H1 (cell line): ENCODE measurements at regions of chr2 and their contacts with region 1.

Region 1: GRCh38 chr2:231713730-231714430 is 5.6 kb downstream of the PTMA start:
- DNase-seq: peak; percentile 76 to 97
- H3K4me3 ChIP-seq: no peak overlapping the region
- H3K27ac ChIP-seq: peak overlapping the region; percentile 69; the same call in 1 of the 2 replicates
- H3K4me1 ChIP-seq: peaks cover 0 to 28% (median 19%) of the 10 kb centered on the region in 4 experiments; a peak in 6 of 7 replicates
- H3K27me3 ChIP-seq: no peaks in the 10 kb centered on the region
- CTCF ChIP-seq: peak in 2 of 3 experiments; percentile 90 to 91; a peak in 3 of 4 replicates
- EP300 ChIP-seq: no peak; a peak in 1 of 3 replicates
- POLR2A ChIP-seq: peak in 1 of 2 experiments; percentile 99; a peak in 2 of 3 replicates
- RAD21 ChIP-seq: peak; percentile 43 to 59

Region 2: DNA sequence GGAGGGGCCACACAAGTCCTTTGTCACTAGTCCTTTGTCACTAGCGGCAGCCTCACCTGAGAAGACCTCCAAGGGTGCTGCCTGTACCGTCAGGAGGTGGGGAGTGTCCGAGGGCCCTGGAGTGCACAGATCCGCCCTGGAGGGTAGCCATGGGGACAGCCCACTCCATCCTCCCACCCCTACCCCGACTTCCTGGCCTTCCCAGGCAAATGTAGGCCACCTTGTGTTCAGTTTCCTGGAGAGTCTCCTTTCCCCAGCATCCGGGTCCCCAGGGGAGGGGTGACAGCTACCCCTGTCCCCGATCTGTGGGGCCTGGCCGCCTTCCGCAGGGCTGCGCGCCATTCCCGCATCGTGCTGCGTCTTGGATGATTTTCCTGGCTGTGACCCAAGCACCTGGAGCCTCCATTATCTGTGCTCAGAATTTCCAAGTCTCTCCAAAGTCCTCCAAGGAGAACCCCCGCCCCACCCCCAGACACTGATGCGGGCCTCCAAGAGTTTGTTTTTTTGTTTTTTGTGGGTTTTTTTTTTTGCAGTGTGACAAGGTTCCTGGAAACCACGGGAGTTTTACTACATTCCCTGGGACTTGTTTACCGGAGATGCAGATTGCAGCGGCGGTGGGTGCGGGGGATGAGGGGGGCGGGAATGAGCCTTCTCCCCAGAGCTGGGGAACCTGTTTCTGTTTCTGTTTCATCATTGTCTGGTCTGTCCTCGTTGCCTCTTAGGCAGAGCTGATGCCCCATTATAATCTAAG is 92.6 kb before region 1 on chr2:
- CTCF ChIA-PET with region 1: interaction called, 17 read pairs
- POLR2A ChIA-PET with region 1: interaction called, 141 read pairs
- DNase-seq: peak in 1 of 2 experiments; percentile 77
- H3K4me3 ChIP-seq: peak overlapping the region in 1 of 4 experiments; percentile 30; a peak in 1 of 8 replicates
- H3K27ac ChIP-seq: peak overlapping the region; percentile 87
- H3K4me1 ChIP-seq: peaks cover 9 to 14% (median 12%) of the 10 kb centered on the region in 4 experiments
- H3K27me3 ChIP-seq: no peaks in the 10 kb centered on the region
- CTCF ChIP-seq: no peak
- EP300 ChIP-seq: no peak
- POLR2A ChIP-seq: no peak
- RAD21 ChIP-seq: no peak

Region 3: GRCh38 chr2:231648587-231649174 is 65.2 kb before region 1 on chr2:
- CTCF ChIA-PET with region 1: interaction called, 16 read pairs
- POLR2A ChIA-PET with region 1: interaction called, 6 read pairs
- DNase-seq: peak in 1 of 2 experiments; percentile 88
- H3K4me3 ChIP-seq: no peak overlapping the region
- H3K27ac ChIP-seq: no peak overlapping the region
- H3K4me1 ChIP-seq: peaks cover 2 to 7% (median 3%) of the 10 kb centered on the region in 4 experiments; a peak in 4 of 7 replicates
- H3K27me3 ChIP-seq: no peaks in the 10 kb centered on the region
- CTCF ChIP-seq: peak; percentile 88 to 95 (median 90)
- EP300 ChIP-seq: no peak
- POLR2A ChIP-seq: no peak
- RAD21 ChIP-seq: peak; percentile 87 to 92

Region 4: DNA sequence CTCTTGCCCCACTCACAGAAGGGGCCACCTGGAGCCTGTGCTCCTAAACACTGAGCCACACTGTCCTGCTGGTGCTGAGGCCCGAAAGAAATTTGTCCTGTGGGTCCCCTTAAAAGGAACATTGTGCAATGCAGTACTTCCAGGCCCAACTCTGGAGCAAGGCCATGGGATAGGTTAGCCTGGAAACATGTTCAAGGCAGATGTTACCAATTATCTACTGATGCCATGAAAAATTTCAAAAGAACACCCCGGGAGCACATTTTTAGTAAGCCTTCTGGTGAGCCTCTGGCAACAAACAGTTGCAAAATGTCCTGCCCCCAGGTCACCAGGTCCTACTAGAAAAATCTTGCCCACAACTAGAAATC is 17.9 kb before region 1 on chr2:
- CTCF ChIA-PET with region 1: interaction called, 555 read pairs
- POLR2A ChIA-PET with region 1: interaction called, 1,080 read pairs
- DNase-seq: no peak
- H3K4me3 ChIP-seq: no peak overlapping the region
- H3K27ac ChIP-seq: no peak overlapping the region
- H3K4me1 ChIP-seq: peaks cover 0 to 3% (median 1%) of the 10 kb centered on the region in 4 experiments; a peak in 1 of 7 replicates
- H3K27me3 ChIP-seq: no peaks in the 10 kb centered on the region
- CTCF ChIP-seq: no peak
- EP300 ChIP-seq: no peak
- POLR2A ChIP-seq: no peak
- RAD21 ChIP-seq: no peak

Region 5: DNA sequence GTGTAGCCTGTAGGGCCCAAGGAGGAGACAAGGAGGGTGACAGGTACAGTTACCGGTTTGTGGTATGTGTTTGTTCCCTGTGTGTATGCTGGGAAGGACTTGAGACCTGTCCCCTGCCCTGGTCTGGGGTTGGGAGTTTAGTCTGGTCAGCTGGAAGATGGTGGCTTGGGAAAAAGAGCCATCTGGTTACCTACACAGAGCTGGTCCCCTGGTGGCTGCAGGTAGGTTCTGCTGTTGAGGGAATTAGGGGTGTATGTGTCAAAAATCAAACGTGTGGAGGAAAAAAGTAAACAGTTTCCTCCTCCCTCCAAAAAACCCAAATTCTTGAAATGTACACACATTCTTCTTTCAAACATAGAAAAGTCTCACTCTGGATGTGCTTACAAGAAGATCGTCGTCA is 18.7 kb after region 1 on chr2:
- CTCF ChIA-PET with region 1: interaction called, 15 read pairs
- POLR2A ChIA-PET with region 1: interaction called, 7 read pairs
- DNase-seq: no peak
- H3K4me3 ChIP-seq: no peak overlapping the region
- H3K27ac ChIP-seq: no peak overlapping the region
- H3K4me1 ChIP-seq: peaks cover 0 to under 1% (median 0%) of the 10 kb centered on the region in 4 experiments; a peak in 2 of 7 replicates
- H3K27me3 ChIP-seq: no peaks in the 10 kb centered on the region
- CTCF ChIP-seq: peak; percentile 31 to 60 (median 39)
- EP300 ChIP-seq: no peak
- POLR2A ChIP-seq: no peak
- RAD21 ChIP-seq: peak; percentile 16 to 41; a peak in 2 of 4 replicates

Region 6: GRCh38 chr2:231780909-231781797 is 67.3 kb after region 1 on chr2 and contains the start of gene PDE6D:
- CTCF ChIA-PET with region 1: interaction called, 18 read pairs
- POLR2A ChIA-PET with region 1: interaction called, 18 read pairs
- DNase-seq: peak; percentile 87 to 100
- H3K4me3 ChIP-seq: peak within 1 kb of the TSS; percentile 61 to 93 (median 86)
- H3K27ac ChIP-seq: peak within 1 kb of the TSS; percentile 3; the same call in 1 of the 2 replicates
- H3K4me1 ChIP-seq: peaks cover 0 to 13% (median 4%) of the 10 kb centered on the region in 4 experiments; a peak in 3 of 7 replicates
- H3K27me3 ChIP-seq: no peaks in the 10 kb centered on the region
- CTCF ChIP-seq: no peak
- EP300 ChIP-seq: no peak
- POLR2A ChIP-seq: peak in 1 of 2 experiments; percentile 52; a peak in 2 of 3 replicates
- RAD21 ChIP-seq: no peak
- total RNA-seq, gene PDE6D: 33.7 and 37.8 TPM in 2 replicates

Region 7: DNA sequence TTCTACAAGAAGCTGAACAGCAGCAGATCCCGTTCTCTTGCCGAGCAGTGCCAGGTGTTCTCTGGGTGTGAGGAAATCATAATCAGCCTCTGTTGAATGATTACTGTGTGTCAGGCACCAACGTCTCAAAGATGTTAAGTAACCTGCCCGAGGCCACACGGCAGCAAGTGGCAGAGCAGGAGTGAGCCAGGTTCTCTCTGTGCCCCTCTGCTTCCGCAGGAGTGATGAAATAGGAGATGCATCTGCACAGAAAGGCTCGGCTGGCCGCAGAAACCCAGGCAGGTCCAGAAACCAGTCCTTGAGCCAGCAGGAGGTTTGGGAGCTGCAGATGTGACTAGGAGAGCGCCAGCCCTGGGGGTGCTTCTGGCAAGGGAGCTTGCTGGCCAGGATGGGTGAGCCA is 140.8 kb after region 1 on chr2:
- CTCF ChIA-PET with region 1: no interaction called
- POLR2A ChIA-PET with region 1: no interaction called
- DNase-seq: no peak
- H3K4me3 ChIP-seq: no peak overlapping the region
- H3K27ac ChIP-seq: no peak overlapping the region
- H3K4me1 ChIP-seq: no peaks in the 10 kb centered on the region
- H3K27me3 ChIP-seq: no peaks in the 10 kb centered on the region
- CTCF ChIP-seq: no peak
- EP300 ChIP-seq: no peak
- POLR2A ChIP-seq: no peak
- RAD21 ChIP-seq: no peak